Heart left ventricle (tissue), 16 donors: ENCODE measurements at regions of chr6 and their contacts with region 1.

Region 1: DNA sequence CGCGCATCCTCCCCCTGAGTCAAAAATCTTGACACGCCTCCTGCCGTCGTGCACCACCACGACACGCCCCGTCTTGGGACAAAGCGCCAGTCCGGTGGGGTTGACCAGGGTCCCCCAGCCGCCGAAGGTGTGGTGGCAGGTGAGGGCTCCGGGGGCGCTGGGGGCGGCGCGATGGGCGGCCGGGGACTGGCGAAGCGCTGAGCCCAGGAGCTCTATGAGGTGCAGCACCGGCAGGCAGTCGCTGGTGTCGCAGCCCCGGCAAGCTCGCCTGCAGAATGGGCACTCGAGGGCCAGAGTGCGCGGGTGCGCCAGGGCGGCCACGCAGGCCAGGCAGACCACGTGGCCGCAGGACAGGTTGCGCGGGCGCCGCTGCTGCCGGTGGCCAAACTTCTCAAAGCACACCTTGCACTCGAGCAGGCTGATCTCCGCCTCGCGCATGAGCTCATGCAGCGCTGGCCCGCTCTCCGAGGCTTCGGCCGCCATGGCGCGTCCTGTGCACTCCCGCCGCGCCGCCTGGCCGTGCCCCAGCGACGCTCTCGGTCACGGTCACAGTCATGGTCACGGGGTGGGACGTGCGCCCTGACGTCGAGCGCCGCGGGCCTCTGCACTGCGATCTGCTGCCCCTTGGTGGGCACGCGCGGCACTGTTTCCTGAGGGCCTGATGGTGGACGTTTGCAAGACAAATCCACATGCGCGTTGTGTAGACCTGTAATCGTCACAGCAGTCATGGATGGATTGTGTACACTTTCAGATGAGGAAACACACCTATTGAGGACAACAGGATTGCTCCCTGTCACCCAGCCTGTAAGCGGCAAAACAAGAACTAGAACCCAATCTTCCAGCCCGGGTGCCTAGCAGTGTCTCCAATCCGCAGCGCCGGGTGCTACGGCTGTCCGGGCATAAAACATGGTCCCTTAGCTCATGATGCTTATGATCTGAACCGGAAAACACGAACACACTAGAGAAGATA is at the start of gene NHLRC1:
- DNase-seq: peak; percentile 88 to 94 (median 93)
- ATAC-seq: peak; percentile 97 to 99 (median 99)
- H3K4me3 ChIP-seq: peak within 1 kb of the TSS; percentile 29 to 74 (median 56)
- H3K27ac ChIP-seq: peak within 1 kb of the TSS in 4 of 12 donors; percentile 16 to 64 (median 50)
- H3K4me1 ChIP-seq: peaks cover 0 to 18% (median 9%) of the 10 kb centered on the region in 12 donors
- H3K27me3 ChIP-seq: no peaks in the 10 kb centered on the region
- CTCF ChIP-seq: peak; percentile 84 to 98 (median 94)
- POLR2A ChIP-seq: peak in 1 of 2 donors; percentile 50
- total RNA-seq, gene NHLRC1: 0.56 to 2.6 (median 1.3) TPM

Region 2: DNA sequence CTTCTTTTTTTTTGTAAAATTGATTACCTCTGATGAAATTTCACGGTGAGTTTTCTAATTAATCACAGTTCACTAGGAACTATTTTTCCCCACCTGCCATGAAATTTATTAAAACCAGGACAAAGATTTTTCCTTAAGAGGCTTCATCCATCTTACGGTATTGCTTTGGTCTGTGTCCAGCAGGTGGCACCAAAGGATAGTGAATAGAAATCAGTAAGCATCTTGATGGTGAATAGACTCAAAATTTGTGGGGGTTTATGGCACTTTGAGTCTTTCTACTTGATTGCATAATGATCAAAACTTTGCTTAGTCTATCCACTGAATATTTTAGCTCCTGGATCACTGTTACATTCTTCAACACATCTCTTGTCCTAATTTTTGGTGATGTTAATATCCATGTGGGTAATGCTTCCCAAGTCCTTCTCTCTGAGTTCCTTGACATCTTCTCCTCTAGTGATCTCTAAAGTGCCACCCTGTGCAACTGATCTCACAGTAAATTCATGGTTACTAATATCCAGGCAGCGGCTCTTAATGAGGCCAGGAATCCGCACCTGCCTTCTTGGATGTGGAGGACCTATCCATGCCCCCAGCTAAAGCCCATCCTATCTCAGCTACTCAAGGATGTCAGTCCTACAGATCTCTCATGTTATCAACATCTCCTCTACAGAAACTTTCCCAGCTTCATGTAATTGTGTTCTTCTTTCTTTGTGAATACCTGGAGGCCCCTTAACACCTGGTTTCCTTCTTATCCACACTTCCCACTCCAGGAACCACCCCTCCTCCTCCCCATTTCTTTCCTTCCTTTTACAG is 966.1 kb before region 1 on chr6:
- intact Hi-C with region 1: loop called in 3 of 10 experiments (anchors 5 to 10 kb)
- DNase-seq: peak in 4 of 5 donors; percentile 36 to 58 (median 55)
- ATAC-seq: peak in 2 of 4 donors; percentile 42 to 57
- H3K4me3 ChIP-seq: no peak overlapping the region
- H3K27ac ChIP-seq: no peak overlapping the region
- H3K4me1 ChIP-seq: no peaks in the 10 kb centered on the region
- H3K27me3 ChIP-seq: no peaks in the 10 kb centered on the region
- CTCF ChIP-seq: peak; percentile 57 to 90 (median 80)
- POLR2A ChIP-seq: no peak

Region 3: DNA sequence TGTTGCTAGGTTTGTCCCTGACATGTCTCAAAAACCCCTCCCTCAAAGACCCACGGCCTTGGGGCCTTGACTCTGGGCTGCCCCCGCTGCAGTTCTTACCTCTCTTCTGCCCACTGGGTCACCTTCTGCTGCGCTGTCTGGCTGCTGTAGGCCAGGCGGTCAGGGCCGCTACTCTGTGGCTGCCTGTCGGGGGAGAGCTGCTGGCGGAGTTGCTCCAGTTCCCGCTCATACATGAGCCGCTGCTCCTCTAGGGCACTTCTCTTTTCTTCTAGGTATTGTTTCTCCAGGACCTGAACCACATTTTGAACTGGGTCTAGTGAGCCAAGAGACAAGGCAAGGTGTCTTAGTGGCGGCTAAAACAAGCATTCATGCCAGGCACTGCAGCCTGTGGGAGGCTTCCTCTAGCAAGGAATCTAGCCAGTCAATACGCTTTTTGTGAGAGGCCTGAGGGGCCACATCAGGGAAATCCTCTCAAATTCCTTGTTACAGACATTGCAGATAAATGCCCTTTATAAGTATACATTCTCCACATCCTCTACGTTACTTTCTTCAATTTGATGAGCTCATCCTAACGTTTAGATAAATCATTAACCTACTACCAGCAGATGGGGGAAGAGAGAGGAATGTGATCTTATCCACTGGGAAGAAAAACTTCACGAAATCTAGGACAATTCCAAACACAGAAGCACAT is 305.3 kb before region 1 on chr6:
- intact Hi-C with region 1: loop called in 1 of 10 experiments (anchors 5 kb)
- DNase-seq: no peak
- ATAC-seq: no peak
- H3K4me3 ChIP-seq: no peak overlapping the region
- H3K27ac ChIP-seq: no peak overlapping the region
- H3K4me1 ChIP-seq: peaks cover 0 to 5% (median 0%) of the 10 kb centered on the region in 12 donors
- H3K27me3 ChIP-seq: no peaks in the 10 kb centered on the region
- CTCF ChIP-seq: no peak
- POLR2A ChIP-seq: no peak

Region 4: GRCh38 chr6:17865798-17866725 is 256.3 kb before region 1 on chr6:
- intact Hi-C with region 1: loop called in 1 of 10 experiments (anchors 10 kb)
- DNase-seq: peak; percentile 61 to 89 (median 66)
- ATAC-seq: peak; percentile 88 to 95 (median 92)
- H3K4me3 ChIP-seq: no peak overlapping the region
- H3K27ac ChIP-seq: peak overlapping the region; percentile 31 to 79 (median 70)
- H3K4me1 ChIP-seq: peaks cover 0 to 86% (median 52%) of the 10 kb centered on the region in 12 donors
- H3K27me3 ChIP-seq: no peaks in the 10 kb centered on the region
- CTCF ChIP-seq: no peak
- POLR2A ChIP-seq: no peak

Region 5: GRCh38 chr6:17987576-17988421 is 134.6 kb before region 1 on chr6 and contains the start of gene KIF13A:
- intact Hi-C with region 1: loop called (anchors 1 to 10 kb)
- DNase-seq: peak; percentile 78 to 88 (median 81)
- ATAC-seq: peak; percentile 23 to 83 (median 73)
- H3K4me3 ChIP-seq: peak within 1 kb of the TSS; percentile 52 to 97 (median 80)
- H3K27ac ChIP-seq: peak within 1 kb of the TSS; percentile 93 to 99 (median 96)
- H3K4me1 ChIP-seq: peaks cover 0 to 46% (median 19%) of the 10 kb centered on the region in 12 donors
- H3K27me3 ChIP-seq: peaks cover 0 to 2% (median 0%) of the 10 kb centered on the region in 9 donors
- CTCF ChIP-seq: peak in 9 of 12 donors; percentile 8 to 58 (median 32)
- POLR2A ChIP-seq: peak in 1 of 2 donors; percentile 52
- total RNA-seq, gene KIF13A: 49.2 to 148 (median 85.1) TPM

Region 6: GRCh38 chr6:18004256-18004985 is 118.0 kb before region 1 on chr6:
- intact Hi-C with region 1: loop called in 3 of 10 experiments (anchors 5 to 10 kb)
- DNase-seq: no peak
- ATAC-seq: no peak
- H3K4me3 ChIP-seq: no peak overlapping the region
- H3K27ac ChIP-seq: no peak overlapping the region
- H3K4me1 ChIP-seq: peaks cover 0 to 4% (median 0%) of the 10 kb centered on the region in 12 donors
- H3K27me3 ChIP-seq: no peaks in the 10 kb centered on the region
- CTCF ChIP-seq: no peak
- POLR2A ChIP-seq: no peak

Region 7: DNA sequence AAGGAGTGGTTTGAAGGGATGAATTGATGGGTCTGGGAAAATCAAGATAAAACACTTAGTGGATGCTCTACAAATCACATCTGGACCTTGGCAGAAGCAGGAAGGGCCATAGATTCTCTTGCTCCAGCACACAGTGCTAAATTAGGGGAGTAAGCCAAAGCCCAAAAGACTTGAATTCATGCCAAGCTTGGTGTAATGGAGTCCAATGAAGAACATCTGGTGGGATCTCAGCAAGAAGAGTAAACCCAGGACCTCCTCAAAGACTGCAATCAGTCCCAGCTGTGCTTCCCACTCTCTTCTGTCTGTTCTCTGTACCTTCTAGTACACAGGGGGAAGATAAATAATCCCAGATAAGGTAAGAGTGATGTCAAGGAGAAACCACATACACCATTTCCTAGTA is 948.1 kb after region 1 on chr6:
- intact Hi-C with region 1: no loop called
- DNase-seq: peak in 2 of 5 donors; percentile 19 to 20
- ATAC-seq: peak in 2 of 4 donors; percentile 69 to 80
- H3K4me3 ChIP-seq: no peak overlapping the region
- H3K27ac ChIP-seq: no peak overlapping the region
- H3K4me1 ChIP-seq: no peaks in the 10 kb centered on the region
- H3K27me3 ChIP-seq: no peaks in the 10 kb centered on the region
- CTCF ChIP-seq: no peak
- POLR2A ChIP-seq: no peak